ENCODE measurements at regions of chr16 and their contacts with region 1.

Region 1: GRCh38 chr16:20849587-20850390 is 43.5 kb downstream of the REXO5 start:
- DNase-seq: peak; percentile 68
- ATAC-seq: peak; percentile 57
- H3K4me3 ChIP-seq: no peak overlapping the region
- H3K27ac ChIP-seq: no peak overlapping the region
- H3K4me1 ChIP-seq: peaks cover 19% of the 10 kb centered on the region
- H3K27me3 ChIP-seq: no peaks in the 10 kb centered on the region
- CTCF ChIP-seq: peak; percentile 98
- EP300 ChIP-seq: no peak
- POLR2A ChIP-seq: no peak
- RAD21 ChIP-seq: peak; percentile 97

Region 2: DNA sequence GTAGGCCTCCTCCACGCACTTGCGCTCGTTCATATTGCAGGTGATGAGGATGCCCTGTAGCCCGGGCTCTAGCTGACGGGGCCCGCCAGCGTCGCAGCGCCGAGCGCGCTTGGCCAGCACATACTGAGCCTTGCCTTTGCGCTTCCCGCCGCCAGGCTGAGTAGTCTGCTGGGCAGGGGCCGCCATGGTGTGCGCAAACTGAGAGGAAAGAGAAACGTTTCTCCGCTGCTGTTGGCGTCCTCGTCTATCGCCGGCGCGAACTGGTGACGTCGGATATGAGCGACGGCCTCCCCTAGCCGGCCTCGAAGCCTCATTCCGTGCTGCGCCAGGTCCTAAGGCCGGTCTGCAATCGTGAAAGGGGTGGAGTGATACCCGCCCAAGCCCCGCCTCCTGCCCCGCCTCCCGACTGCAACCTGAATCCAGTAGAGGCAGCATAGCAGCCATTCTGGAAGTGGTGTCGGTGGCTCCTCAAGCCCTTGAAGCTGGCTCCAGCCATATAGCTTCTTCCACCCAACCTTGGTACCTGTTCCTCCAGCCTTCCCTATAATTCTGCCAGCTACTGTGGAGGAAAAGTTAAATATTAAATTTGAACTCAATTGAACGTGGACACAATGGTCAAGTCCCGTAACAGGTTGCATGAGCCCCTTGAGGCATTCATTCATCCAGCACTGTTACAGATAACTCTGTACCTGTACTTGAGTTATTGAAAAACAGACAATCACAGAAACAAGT is 108.1 kb before region 1 on chr16 and contains the start of gene THUMPD1:
- CTCF ChIA-PET with region 1: no interaction called
- POLR2A ChIA-PET with region 1: no interaction called
- in situ Hi-C with region 1: no loop called
- intact Hi-C with region 1: no loop called
- DNase-seq: peak; percentile 95
- ATAC-seq: peak; percentile 94
- H3K4me3 ChIP-seq: peak within 1 kb of the TSS; percentile 89 to 99 (median 97)
- H3K27ac ChIP-seq: peak within 1 kb of the TSS; percentile 87
- H3K4me1 ChIP-seq: peaks cover 34% of the 10 kb centered on the region
- H3K27me3 ChIP-seq: no peaks in the 10 kb centered on the region; a peak in 1 of 5 replicates
- CTCF ChIP-seq: peak; percentile 57; the same call in 1 of the 2 replicates
- EP300 ChIP-seq: peak; percentile 33 to 94; a peak in 3 of 4 replicates
- POLR2A ChIP-seq: peak; percentile 89 to 94
- RAD21 ChIP-seq: peak; percentile 66; the same call in 1 of the 2 replicates
- total RNA-seq, gene THUMPD1: 69.1 and 102 TPM in 2 replicates

Region 3: GRCh38 chr16:20879175-20880040 is 29.6 kb after region 1 on chr16:
- CTCF ChIA-PET with region 1: interaction called, 5 read pairs
- POLR2A ChIA-PET with region 1: no interaction called
- in situ Hi-C with region 1: no loop called
- intact Hi-C with region 1: loop called (anchors 2 kb)
- DNase-seq: peak; percentile 57
- ATAC-seq: peak; percentile 49
- H3K4me3 ChIP-seq: peak overlapping the region in 2 of 3 experiments; percentile 27 to 36; a peak in 4 of 6 replicates
- H3K27ac ChIP-seq: peak overlapping the region; percentile 58
- H3K4me1 ChIP-seq: peaks cover 83% of the 10 kb centered on the region
- H3K27me3 ChIP-seq: no peaks in the 10 kb centered on the region
- CTCF ChIP-seq: no peak
- EP300 ChIP-seq: no peak
- POLR2A ChIP-seq: no peak
- RAD21 ChIP-seq: no peak

Region 4: GRCh38 chr16:20928774-20929411 is 79.1 kb after region 1 on chr16:
- CTCF ChIA-PET with region 1: no interaction called
- POLR2A ChIA-PET with region 1: no interaction called
- in situ Hi-C with region 1: no loop called
- intact Hi-C with region 1: loop called (anchors 5 kb)
- DNase-seq: no peak
- ATAC-seq: no peak
- H3K4me3 ChIP-seq: no peak overlapping the region
- H3K27ac ChIP-seq: no peak overlapping the region
- H3K4me1 ChIP-seq: peaks cover 22% of the 10 kb centered on the region
- H3K27me3 ChIP-seq: no peaks in the 10 kb centered on the region
- CTCF ChIP-seq: no peak
- EP300 ChIP-seq: no peak
- POLR2A ChIP-seq: no peak
- RAD21 ChIP-seq: no peak

Region 5: DNA sequence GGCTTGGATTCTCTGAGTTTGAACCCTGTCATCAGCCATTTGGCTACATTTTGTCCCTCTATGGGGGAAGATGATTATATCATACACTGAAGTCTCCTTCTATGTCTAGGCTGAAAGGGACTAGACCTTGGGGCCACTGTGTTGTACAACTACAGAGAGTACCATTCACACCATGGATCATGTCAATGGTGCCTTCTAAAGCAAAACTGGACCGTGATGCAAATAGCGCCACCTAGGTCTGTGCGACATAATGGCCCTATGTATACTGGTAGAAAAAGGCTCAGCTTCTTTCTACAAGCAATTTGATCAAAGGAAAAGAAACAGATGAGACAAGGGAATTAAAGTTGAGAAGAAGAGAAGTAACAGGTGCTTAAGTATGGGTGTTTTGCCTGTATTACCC is 151.5 kb after region 1 on chr16:
- CTCF ChIA-PET with region 1: interaction called, 17 read pairs
- POLR2A ChIA-PET with region 1: no interaction called
- in situ Hi-C with region 1: no loop called
- intact Hi-C with region 1: loop called (anchors 2 kb)
- DNase-seq: peak; percentile 46
- ATAC-seq: peak; percentile 88
- H3K4me3 ChIP-seq: no peak overlapping the region
- H3K27ac ChIP-seq: no peak overlapping the region
- H3K4me1 ChIP-seq: no peaks in the 10 kb centered on the region
- H3K27me3 ChIP-seq: peaks cover 0 to 5% of the 10 kb centered on the region in 2 experiments; a peak in 2 of 5 replicates
- CTCF ChIP-seq: peak; percentile 74
- EP300 ChIP-seq: no peak
- POLR2A ChIP-seq: no peak
- RAD21 ChIP-seq: no peak

Region 6: GRCh38 chr16:21101631-21102420 is 252.0 kb after region 1 on chr16:
- CTCF ChIA-PET with region 1: interaction called, 20 read pairs
- POLR2A ChIA-PET with region 1: no interaction called
- in situ Hi-C with region 1: no loop called
- intact Hi-C with region 1: loop called (anchors 1 kb)
- DNase-seq: peak; percentile 43
- ATAC-seq: peak; percentile 97
- H3K4me3 ChIP-seq: no peak overlapping the region
- H3K27ac ChIP-seq: no peak overlapping the region
- H3K4me1 ChIP-seq: no peaks in the 10 kb centered on the region
- H3K27me3 ChIP-seq: peaks cover 1 to 23% of the 10 kb centered on the region in 2 experiments; a peak in 3 of 5 replicates
- CTCF ChIP-seq: peak; percentile 76
- EP300 ChIP-seq: no peak
- POLR2A ChIP-seq: no peak
- RAD21 ChIP-seq: peak; percentile 66